ENCODE measurements at regions of chr14 and their contacts with region 1.

Region 1: GRCh38 chr14:45253068-45253753 is at the start of gene MIS18BP1:
- DNase-seq: peak; percentile 97
- ATAC-seq: peak; percentile 95
- H3K4me3 Mint-ChIP-seq: peak within 1 kb of the TSS; percentile 84
- H3K27ac Mint-ChIP-seq: peak within 1 kb of the TSS; percentile 98
- H3K4me1 Mint-ChIP-seq: peaks cover 26% of the 10 kb centered on the region
- H3K27me3 Mint-ChIP-seq: peaks cover 2% of the 10 kb centered on the region
- total RNA-seq, gene MIS18BP1: 66.4 to 71.8 TPM

Region 2: DNA sequence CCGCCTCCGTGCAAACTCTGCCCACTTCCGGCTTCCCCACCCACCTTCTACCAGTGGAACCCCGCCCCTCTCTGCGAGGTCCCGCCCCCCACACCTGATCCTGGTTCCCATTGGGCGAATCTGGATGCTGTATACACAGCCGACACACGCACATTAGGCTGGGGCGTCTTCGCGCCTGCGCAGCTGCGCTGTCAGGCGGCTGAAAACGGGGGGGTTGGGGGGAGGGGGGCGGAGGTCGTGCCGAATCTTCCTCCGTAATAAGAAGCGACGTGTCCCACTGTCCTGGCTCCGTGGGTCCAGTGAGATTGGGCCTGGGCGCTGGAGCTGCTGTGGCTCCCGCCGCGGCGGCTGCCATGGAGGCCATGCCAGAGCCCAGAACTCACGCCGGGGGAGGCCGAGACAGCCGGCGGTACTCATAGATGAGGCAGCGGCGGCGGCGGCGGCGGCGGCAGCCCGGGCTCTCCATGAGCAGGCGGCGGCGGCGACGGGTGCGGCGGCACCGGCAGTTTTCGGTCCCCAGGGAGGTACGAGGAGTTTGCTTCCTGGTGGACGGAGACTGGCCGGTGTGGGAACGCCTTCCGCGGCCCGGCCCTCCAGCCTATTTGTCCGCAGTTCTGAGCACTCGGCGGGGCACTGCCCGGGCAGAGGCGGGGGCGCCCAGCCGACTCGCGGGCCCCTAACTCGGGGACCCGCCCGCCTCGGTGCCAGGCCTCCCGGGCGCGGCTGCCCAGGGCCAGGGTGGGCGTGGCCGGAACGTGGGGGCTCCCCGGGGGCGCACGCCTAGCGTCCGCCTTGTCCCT is 356.0 kb before region 1 on chr14:
- CTCF ChIA-PET with region 1: no interaction called
- POLR2A ChIA-PET with region 1: interaction called, 10 read pairs
- DNase-seq: peak; percentile 99
- ATAC-seq: peak; percentile 98
- H3K4me3 Mint-ChIP-seq: peak overlapping the region; percentile 89
- H3K27ac Mint-ChIP-seq: peak overlapping the region; percentile 93
- H3K4me1 Mint-ChIP-seq: peaks cover 22% of the 10 kb centered on the region
- H3K27me3 Mint-ChIP-seq: no peaks in the 10 kb centered on the region

Region 3: GRCh38 chr14:45134051-45134958 is 118.9 kb before region 1 on chr14 and contains the start of gene FKBP3:
- CTCF ChIA-PET with region 1: interaction called, 6 read pairs
- POLR2A ChIA-PET with region 1: interaction called, 18 read pairs
- DNase-seq: peak; percentile 98
- ATAC-seq: peak; percentile 95
- H3K4me3 Mint-ChIP-seq: peak within 1 kb of the TSS; percentile 90
- H3K27ac Mint-ChIP-seq: peak within 1 kb of the TSS; percentile 97
- H3K4me1 Mint-ChIP-seq: peaks cover 36% of the 10 kb centered on the region
- H3K27me3 Mint-ChIP-seq: no peaks in the 10 kb centered on the region
- total RNA-seq, gene FKBP3: 70.2 to 74.9 TPM

Region 4: GRCh38 chr14:45267071-45267470 is 13.9 kb after region 1 on chr14:
- CTCF ChIA-PET with region 1: interaction called, 26 read pairs
- POLR2A ChIA-PET with region 1: interaction called, 3 read pairs
- DNase-seq: no peak
- ATAC-seq: no peak
- H3K4me3 Mint-ChIP-seq: no peak overlapping the region
- H3K27ac Mint-ChIP-seq: no peak overlapping the region
- H3K4me1 Mint-ChIP-seq: no peaks in the 10 kb centered on the region
- H3K27me3 Mint-ChIP-seq: no peaks in the 10 kb centered on the region

Measured in activated CD8-positive, alpha-beta T cell treated with anti-CD3 and anti-CD28 coated beads, Interleukin-2, amount 10 ng/mL, durations not matched to agents 7 days and 5 days (primary cell).